CD14-positive monocyte (primary cell): ENCODE measurements at regions of chr16 and their contacts with region 1.

Region 1: GRCh38 chr16:11497851-11498289 is 88.8 kb downstream of the LITAF start:
- DNase-seq: peak in 2 of 3 donors; percentile 28 to 35
- H3K4me3 ChIP-seq: no peak overlapping the region
- H3K4me3 Mint-ChIP-seq: no peak overlapping the region
- H3K27ac ChIP-seq: peak overlapping the region; percentile 50 to 62
- H3K27ac Mint-ChIP-seq: peak overlapping the region; percentile 82 to 95 (median 91)
- H3K4me1 ChIP-seq: peaks cover 32 to 44% of the 10 kb centered on the region in 2 donors
- H3K4me1 Mint-ChIP-seq: peaks cover 39% of the 10 kb centered on the region
- H3K27me3 ChIP-seq: no peaks in the 10 kb centered on the region
- H3K27me3 Mint-ChIP-seq: peaks cover 0 to 1% (median under 1%) of the 10 kb centered on the region in 3 donors
- CTCF ChIP-seq: no peak

Region 2: GRCh38 chr16:10136916-10137315 is 1361.0 kb before region 1 on chr16:
- intact Hi-C with region 1: no loop called
- DNase-seq: no peak
- H3K4me3 ChIP-seq: no peak overlapping the region
- H3K4me3 Mint-ChIP-seq: no peak overlapping the region
- H3K27ac ChIP-seq: no peak overlapping the region
- H3K27ac Mint-ChIP-seq: no peak overlapping the region
- H3K4me1 ChIP-seq: no peaks in the 10 kb centered on the region
- H3K4me1 Mint-ChIP-seq: no peaks in the 10 kb centered on the region
- H3K27me3 ChIP-seq: no peaks in the 10 kb centered on the region
- H3K27me3 Mint-ChIP-seq: peaks cover 0 to 2% (median 2%) of the 10 kb centered on the region in 3 donors
- CTCF ChIP-seq: no peak

Region 3: GRCh38 chr16:11474617-11475291 is 23.1 kb before region 1 on chr16:
- intact Hi-C with region 1: loop called in 1 of 2 experiments (anchors 2 kb)
- DNase-seq: no peak
- H3K4me3 ChIP-seq: no peak overlapping the region
- H3K4me3 Mint-ChIP-seq: no peak overlapping the region
- H3K27ac ChIP-seq: no peak overlapping the region
- H3K27ac Mint-ChIP-seq: peak overlapping the region in 1 of 7 donors; percentile 70
- H3K4me1 ChIP-seq: no peaks in the 10 kb centered on the region
- H3K4me1 Mint-ChIP-seq: no peaks in the 10 kb centered on the region
- H3K27me3 ChIP-seq: no peaks in the 10 kb centered on the region
- H3K27me3 Mint-ChIP-seq: peaks cover 0 to 4% (median 0%) of the 10 kb centered on the region in 3 donors
- CTCF ChIP-seq: no peak

Region 4: GRCh38 chr16:11484691-11485258 is 13.1 kb before region 1 on chr16:
- intact Hi-C with region 1: no loop called
- DNase-seq: no peak
- H3K4me3 ChIP-seq: no peak overlapping the region
- H3K4me3 Mint-ChIP-seq: no peak overlapping the region
- H3K27ac ChIP-seq: no peak overlapping the region
- H3K27ac Mint-ChIP-seq: no peak overlapping the region
- H3K4me1 ChIP-seq: no peaks in the 10 kb centered on the region
- H3K4me1 Mint-ChIP-seq: no peaks in the 10 kb centered on the region
- H3K27me3 ChIP-seq: no peaks in the 10 kb centered on the region
- H3K27me3 Mint-ChIP-seq: peaks cover 0 to 2% (median 0%) of the 10 kb centered on the region in 3 donors
- CTCF ChIP-seq: no peak

Region 5: DNA sequence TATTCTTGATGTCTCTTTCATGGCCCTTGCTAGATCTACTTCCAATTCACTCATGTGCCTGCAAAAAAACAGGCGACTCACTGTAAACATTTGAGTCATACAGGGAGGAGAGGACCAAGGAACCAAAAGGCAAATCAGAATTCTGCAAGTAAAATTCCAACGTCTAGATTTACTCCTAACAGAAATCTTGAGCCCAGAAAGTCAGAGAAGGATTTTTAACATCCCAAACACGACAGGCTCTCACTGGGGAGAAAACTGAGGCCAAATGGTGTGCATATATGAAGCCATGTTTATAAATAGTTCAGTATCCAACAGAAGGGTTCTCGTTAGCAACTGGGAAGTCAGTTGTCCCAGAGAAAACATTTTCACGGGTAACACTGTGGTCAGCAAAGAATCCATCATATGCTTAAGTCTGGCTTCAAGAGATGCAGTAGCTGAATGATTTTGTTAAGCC is 48.8 kb after region 1 on chr16:
- intact Hi-C with region 1: no loop called
- DNase-seq: no peak
- H3K4me3 ChIP-seq: no peak overlapping the region
- H3K4me3 Mint-ChIP-seq: no peak overlapping the region
- H3K27ac ChIP-seq: no peak overlapping the region
- H3K27ac Mint-ChIP-seq: no peak overlapping the region
- H3K4me1 ChIP-seq: peaks cover 14% of the 10 kb centered on the region in 2 donors
- H3K4me1 Mint-ChIP-seq: peaks cover 23% of the 10 kb centered on the region
- H3K27me3 ChIP-seq: no peaks in the 10 kb centered on the region
- H3K27me3 Mint-ChIP-seq: peaks cover 1 to 6% (median 2%) of the 10 kb centered on the region in 3 donors
- CTCF ChIP-seq: no peak

Region 6: GRCh38 chr16:11586856-11587642 is 89.2 kb after region 1 on chr16 and contains the start of gene LITAF:
- intact Hi-C with region 1: loop called in 1 of 2 experiments (anchors 5 kb)
- DNase-seq: peak in 2 of 3 donors; percentile 47 to 54
- H3K4me3 ChIP-seq: peak within 1 kb of the TSS; percentile 59 to 86 (median 66)
- H3K4me3 Mint-ChIP-seq: peak within 1 kb of the TSS; percentile 96 to 99
- H3K27ac ChIP-seq: peak within 1 kb of the TSS; percentile 83 to 93
- H3K27ac Mint-ChIP-seq: peak within 1 kb of the TSS; percentile 95 to 100 (median 98)
- H3K4me1 ChIP-seq: peaks cover 47 to 48% of the 10 kb centered on the region in 2 donors
- H3K4me1 Mint-ChIP-seq: peaks cover 45% of the 10 kb centered on the region
- H3K27me3 ChIP-seq: no peaks in the 10 kb centered on the region
- H3K27me3 Mint-ChIP-seq: peaks cover 1 to 43% (median 22%) of the 10 kb centered on the region in 3 donors
- CTCF ChIP-seq: no peak
- polyA plus RNA-seq, gene LITAF: 67.9 to 118 (median 69.0) TPM